Mammary epithelial cell (primary cell): ENCODE measurements at regions of chr19 and their contacts with region 1.

Region 1: DNA sequence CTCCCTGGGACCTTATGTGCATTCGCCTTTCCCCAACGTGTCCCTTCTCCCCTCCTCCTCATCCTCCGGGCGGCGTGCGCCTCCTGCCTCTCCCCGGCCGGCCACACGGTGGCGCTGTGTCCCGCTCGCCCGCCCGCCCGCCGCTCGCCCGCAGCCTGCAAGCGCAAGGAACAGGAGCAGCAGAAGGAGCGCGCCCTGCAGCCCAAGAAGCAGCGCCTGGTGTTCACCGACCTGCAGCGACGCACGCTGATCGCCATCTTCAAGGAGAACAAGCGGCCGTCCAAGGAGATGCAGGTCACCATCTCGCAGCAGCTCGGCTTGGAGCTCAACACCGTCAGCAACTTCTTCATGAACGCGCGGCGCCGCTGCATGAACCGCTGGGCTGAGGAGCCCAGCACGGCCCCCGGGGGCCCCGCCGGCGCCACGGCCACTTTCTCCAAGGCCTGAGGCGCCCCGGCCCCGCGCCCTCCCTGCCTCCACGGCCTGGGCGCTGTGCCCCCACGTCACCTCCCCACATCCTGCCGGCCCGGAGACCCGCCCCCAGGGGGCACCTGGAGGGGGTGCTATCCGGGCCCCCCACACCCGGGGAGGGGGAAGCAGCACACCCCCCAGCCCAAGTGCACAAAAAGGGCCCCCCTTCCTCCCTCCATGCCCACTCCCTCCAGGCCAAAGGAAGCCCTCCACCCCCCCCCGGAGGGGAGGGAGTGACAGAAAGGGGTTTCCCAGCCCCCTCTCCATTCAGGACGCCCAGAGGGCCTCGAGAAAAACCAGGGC is 21.9 kb downstream of the ONECUT3 start:
- DNase-seq: no peak
- H3K4me3 ChIP-seq: no peak overlapping the region
- H3K27ac ChIP-seq: no peak overlapping the region
- H3K4me1 ChIP-seq: peaks cover 27% of the 10 kb centered on the region
- H3K27me3 ChIP-seq: no peaks in the 10 kb centered on the region
- CTCF ChIP-seq: peak; percentile 48 to 52

Region 2: DNA sequence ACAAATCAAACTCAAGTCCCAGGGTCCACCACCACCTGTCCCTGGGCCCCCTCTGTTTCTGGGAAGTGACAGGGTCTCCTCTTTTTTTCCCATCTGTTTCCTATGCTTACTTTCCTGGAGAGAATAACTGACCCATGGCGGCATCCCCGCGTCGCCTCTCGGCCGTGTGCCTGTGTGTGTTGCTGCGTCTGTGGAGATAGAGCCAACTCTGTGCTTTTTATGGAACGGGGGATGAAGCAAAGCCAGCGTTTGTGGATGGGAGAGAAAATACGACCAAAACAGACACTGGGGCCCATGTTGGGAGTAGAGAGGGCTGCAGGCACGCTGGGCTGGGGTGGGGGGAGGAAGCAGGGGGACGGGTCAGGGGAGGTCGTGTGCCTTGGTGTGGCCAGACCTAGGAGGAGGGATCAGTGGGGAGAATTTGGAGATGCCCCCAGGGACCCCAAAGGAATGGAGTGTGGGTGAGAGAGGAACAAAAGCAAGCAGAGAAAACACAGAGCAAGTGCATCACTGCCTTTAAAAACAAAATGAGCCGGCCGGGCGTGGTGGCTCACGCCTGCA is 234.7 kb before region 1 on chr19:
- CTCF ChIA-PET with region 1: no interaction called
- dilution Hi-C with region 1: no loop called
- in situ Hi-C with region 1: loop called in 1 of 2 experiments (anchors 25 kb)
- intact Hi-C with region 1: no loop called
- DNase-seq: no peak
- H3K4me3 ChIP-seq: no peak overlapping the region
- H3K27ac ChIP-seq: no peak overlapping the region
- H3K4me1 ChIP-seq: no peaks in the 10 kb centered on the region
- H3K27me3 ChIP-seq: no peaks in the 10 kb centered on the region
- CTCF ChIP-seq: no peak

Region 3: GRCh38 chr19:1699386-1699785 is 75.8 kb before region 1 on chr19:
- CTCF ChIA-PET with region 1: no interaction called
- dilution Hi-C with region 1: loop called (anchors 5 kb)
- in situ Hi-C with region 1: no loop called
- intact Hi-C with region 1: no loop called
- DNase-seq: no peak
- H3K4me3 ChIP-seq: no peak overlapping the region
- H3K27ac ChIP-seq: no peak overlapping the region
- H3K4me1 ChIP-seq: no peaks in the 10 kb centered on the region
- H3K27me3 ChIP-seq: peaks cover 18% of the 10 kb centered on the region
- CTCF ChIP-seq: no peak

Region 4: GRCh38 chr19:1747285-1748114 is 27.7 kb before region 1 on chr19:
- CTCF ChIA-PET with region 1: no interaction called
- dilution Hi-C with region 1: no loop called
- in situ Hi-C with region 1: no loop called
- intact Hi-C with region 1: loop called (anchors 2 kb)
- DNase-seq: peak; percentile 99
- H3K4me3 ChIP-seq: peak overlapping the region; percentile 47 to 55 (median 52)
- H3K27ac ChIP-seq: peak overlapping the region; percentile 87
- H3K4me1 ChIP-seq: peaks cover 37% of the 10 kb centered on the region
- H3K27me3 ChIP-seq: peaks cover 15% of the 10 kb centered on the region
- CTCF ChIP-seq: no peak

Region 5: DNA sequence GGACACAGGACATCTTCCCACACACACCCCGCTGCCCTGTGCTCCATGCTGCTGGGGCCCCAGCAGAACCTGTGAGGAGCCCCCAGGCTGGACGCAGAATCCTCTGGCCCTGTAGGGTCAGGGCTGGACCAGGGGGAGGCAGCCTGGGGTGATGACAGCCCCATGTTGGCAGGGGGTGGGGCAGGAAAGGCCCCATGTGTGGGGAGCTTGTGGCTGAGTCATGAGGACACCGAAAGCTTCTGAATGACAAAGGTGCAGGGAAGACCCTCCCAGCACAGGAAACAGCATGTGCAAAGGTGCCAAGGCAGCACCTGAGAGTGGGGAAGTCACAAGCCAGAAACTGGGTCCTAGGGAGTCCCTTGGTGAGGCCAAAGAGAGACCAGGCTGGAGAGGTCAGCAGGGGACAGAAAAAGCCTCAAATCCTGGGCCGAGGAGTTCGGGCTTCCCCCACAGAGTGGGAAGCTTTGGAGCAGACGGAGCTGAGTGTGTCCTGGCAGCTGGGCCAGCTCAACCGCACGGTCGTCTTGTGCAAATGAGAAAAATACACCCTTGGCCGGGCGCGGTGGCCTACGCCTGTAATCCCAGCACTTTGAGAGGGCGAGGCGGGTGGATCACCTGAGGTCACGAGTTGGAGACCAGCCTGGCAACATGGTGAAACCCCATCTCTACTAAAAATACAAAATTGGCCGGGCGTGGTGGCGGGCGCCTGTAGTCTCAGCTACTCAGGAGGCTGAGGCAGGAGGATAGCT is 19.4 kb after region 1 on chr19:
- CTCF ChIA-PET with region 1: interaction called, 5 read pairs
- dilution Hi-C with region 1: no loop called
- in situ Hi-C with region 1: no loop called
- intact Hi-C with region 1: loop called (anchors 1 kb)
- DNase-seq: no peak
- H3K4me3 ChIP-seq: no peak overlapping the region
- H3K27ac ChIP-seq: no peak overlapping the region
- H3K4me1 ChIP-seq: peaks cover 5% of the 10 kb centered on the region
- H3K27me3 ChIP-seq: no peaks in the 10 kb centered on the region
- CTCF ChIP-seq: no peak

Region 6: DNA sequence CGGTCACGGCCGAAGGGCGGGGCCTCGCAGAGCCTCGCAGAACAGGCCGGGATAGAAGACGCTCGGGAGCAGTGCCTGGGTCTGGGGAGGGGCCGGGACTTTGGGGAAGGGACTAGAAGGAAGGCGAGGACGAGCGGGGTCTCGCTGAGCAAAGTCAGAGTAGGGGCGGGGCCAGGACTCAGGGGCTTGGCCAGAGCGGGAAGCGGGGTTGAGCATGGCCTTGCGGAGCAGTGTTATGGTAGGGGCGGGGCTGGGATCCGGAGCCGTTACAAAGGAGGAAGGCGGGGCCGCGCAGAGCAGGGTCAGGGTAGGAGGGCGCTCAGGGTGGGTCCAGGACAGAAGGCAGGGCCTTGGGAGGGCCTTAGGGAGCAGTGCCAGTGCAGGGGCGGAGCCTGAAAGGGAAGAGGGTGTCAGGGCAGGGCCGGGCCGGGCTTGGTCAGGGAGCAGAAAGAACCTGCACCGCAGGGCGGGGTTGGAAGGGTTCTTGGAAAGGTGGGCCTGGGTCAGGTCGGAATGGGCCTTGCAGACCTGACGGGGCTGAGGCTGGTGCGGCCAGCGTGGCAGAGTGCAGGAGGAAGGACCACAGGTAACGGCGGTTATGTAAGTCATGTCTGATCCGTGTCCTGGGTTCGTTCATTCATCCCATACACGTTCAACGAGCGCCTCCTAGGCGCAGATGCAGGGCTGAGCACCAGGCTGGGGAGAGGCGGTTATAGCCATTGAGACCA is 37.4 kb after region 1 on chr19:
- CTCF ChIA-PET with region 1: no interaction called
- dilution Hi-C with region 1: no loop called
- in situ Hi-C with region 1: no loop called
- intact Hi-C with region 1: loop called (anchors 1 kb)
- DNase-seq: peak; percentile 95
- H3K4me3 ChIP-seq: peak overlapping the region; percentile 57 to 67 (median 58)
- H3K27ac ChIP-seq: peak overlapping the region; percentile 53
- H3K4me1 ChIP-seq: peaks cover 16% of the 10 kb centered on the region
- H3K27me3 ChIP-seq: no peaks in the 10 kb centered on the region
- CTCF ChIP-seq: peak; percentile 63 to 73

Region 7: DNA sequence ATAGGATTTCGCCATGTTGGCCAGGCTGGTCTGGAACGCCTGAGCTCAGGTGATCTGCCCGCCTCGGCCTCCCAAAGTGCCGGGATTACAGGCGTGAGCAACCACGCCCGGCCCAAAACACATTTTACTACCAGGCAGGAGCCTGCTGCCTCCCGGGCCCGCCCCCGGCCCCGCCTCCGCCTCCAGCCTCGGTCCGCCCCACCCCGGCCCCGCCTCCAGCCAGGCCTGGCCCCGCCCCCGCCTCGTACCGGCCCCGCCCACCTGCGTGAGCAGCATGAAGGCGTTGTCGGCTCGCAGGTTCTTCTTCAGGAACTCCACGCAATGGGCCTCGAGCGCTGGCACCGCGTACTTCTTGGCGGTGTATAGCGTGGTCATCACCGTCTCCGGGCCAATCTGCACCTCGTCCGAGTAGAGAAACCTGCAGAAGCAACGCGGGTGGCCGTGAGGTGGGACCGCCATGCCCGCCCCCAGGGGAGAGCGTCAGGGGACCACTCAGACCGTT is 217.6 kb after region 1 on chr19:
- CTCF ChIA-PET with region 1: no interaction called
- dilution Hi-C with region 1: no loop called
- in situ Hi-C with region 1: no loop called
- intact Hi-C with region 1: no loop called
- DNase-seq: no peak
- H3K4me3 ChIP-seq: no peak overlapping the region
- H3K27ac ChIP-seq: no peak overlapping the region
- H3K4me1 ChIP-seq: no peaks in the 10 kb centered on the region
- H3K27me3 ChIP-seq: no peaks in the 10 kb centered on the region
- CTCF ChIP-seq: no peak